ENCODE measurements at regions of chr13 and their contacts with region 1.

Region 1: DNA sequence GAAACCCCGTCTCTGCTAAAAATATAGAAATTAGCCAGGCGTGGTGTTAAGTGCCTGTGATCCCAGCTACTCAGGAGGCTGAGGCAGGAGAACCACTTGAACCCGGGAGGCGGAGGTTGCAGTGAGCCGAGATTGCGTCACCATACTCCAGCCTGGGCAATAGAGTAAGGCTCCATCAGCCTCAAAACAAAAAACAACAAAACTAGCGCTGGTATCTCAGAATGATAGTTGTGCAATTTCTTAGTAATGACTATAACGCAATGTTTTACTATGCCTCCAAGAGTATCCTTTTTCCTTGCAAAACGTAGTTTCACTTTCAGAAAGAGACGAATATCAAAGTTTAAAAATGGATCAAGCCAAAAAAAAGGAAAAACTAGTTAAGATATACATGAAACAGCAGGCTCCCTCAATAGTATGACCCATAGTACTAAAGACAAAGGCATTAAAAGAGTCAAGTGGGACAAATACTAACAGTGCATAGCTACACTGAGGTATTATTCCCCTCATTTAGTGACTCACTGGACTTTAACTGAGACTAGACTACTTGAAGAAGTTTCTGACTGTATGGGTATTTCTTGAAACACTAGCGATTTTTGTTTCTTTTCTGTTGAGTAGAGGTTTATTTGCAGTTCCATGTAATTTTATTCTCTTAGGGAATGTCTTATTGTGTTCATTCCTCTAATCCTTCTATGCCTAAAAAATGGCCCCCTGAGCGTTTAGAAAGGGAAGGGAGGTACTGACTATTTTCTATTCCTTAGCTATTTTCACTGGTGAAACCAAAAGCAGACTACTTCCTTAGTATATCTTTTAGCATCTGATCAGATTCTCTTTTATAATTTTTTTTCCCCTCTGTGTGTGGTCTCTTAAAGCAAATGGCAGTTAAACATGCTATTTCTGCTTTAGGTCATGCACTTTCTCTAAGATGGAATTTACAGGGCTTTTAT is 10.4 kb upstream of the ITM2B start:
- DNase-seq: no peak
- H3K4me3 Mint-ChIP-seq: no peak overlapping the region
- H3K27ac Mint-ChIP-seq: no peak overlapping the region
- H3K4me1 Mint-ChIP-seq: peaks cover 37% of the 10 kb centered on the region
- H3K27me3 Mint-ChIP-seq: peaks cover 32% of the 10 kb centered on the region

Region 2: GRCh38 chr13:48155848-48156247 is 66.8 kb before region 1 on chr13:
- intact Hi-C with region 1: loop called (anchors 1 kb)
- DNase-seq: peak; percentile 9
- H3K4me3 Mint-ChIP-seq: no peak overlapping the region
- H3K27ac Mint-ChIP-seq: peak overlapping the region; percentile 30
- H3K4me1 Mint-ChIP-seq: peaks cover 73% of the 10 kb centered on the region
- H3K27me3 Mint-ChIP-seq: no peaks in the 10 kb centered on the region

Region 3: DNA sequence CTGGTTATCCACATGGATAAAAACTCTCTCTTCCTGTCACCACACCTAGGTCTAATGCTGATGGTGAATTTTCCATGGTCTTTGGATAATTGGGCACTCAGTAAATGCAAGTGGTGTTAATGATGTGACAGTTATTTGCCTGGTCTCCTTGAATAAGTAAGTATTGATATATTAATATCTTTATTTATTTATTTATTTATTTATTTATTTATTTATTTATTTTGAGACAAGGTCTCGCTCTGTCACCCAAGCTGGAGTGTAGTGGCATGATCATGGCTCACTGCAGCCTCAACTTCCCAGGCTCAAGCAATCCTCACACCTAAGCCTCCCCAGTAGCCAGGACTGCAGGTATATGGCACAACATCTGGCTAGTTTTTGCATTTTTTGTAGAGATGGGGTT is 35.9 kb before region 1 on chr13:
- intact Hi-C with region 1: loop called (anchors 1 kb)
- DNase-seq: no peak
- H3K4me3 Mint-ChIP-seq: no peak overlapping the region
- H3K27ac Mint-ChIP-seq: no peak overlapping the region
- H3K4me1 Mint-ChIP-seq: peaks cover 21% of the 10 kb centered on the region
- H3K27me3 Mint-ChIP-seq: peaks cover 10% of the 10 kb centered on the region

Region 4: GRCh38 chr13:48210178-48210577 is 12.5 kb before region 1 on chr13:
- intact Hi-C with region 1: loop called (anchors 1 kb)
- DNase-seq: no peak
- H3K4me3 Mint-ChIP-seq: no peak overlapping the region
- H3K27ac Mint-ChIP-seq: no peak overlapping the region
- H3K4me1 Mint-ChIP-seq: peaks cover 10% of the 10 kb centered on the region
- H3K27me3 Mint-ChIP-seq: peaks cover 49% of the 10 kb centered on the region

Region 5: DNA sequence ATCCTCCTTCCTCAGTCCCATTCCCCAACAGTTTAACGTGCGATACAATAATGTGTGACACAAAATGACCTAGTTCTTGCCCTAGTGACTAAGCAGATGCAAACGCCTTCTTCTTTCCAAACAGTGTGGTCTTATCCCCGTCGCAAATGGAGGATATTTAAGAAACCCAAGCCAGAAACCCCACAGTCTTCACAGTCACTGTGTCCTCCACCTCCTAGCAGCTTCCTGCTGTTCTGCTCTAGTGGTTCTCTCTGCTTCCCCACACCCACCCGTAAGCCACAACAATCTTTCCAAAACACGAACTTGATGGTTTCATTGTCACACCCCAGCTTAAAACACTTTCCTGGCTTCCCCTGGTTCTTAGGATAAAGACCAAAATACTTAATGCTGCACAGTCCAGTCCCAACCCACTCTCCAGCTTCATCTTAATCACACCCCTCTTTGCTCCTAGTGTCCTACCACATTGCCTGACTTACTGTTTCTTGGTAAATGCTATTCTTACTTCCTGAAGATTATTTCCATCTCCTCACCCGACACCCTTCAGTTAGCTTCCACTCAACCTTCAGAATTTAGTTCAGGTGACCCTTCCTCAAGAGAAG is 42.7 kb after region 1 on chr13:
- intact Hi-C with region 1: loop called (anchors 5 kb)
- DNase-seq: peak; percentile 13
- H3K4me3 Mint-ChIP-seq: peak overlapping the region; percentile 8
- H3K27ac Mint-ChIP-seq: peak overlapping the region; percentile 40
- H3K4me1 Mint-ChIP-seq: peaks cover 24% of the 10 kb centered on the region
- H3K27me3 Mint-ChIP-seq: no peaks in the 10 kb centered on the region

Region 6: DNA sequence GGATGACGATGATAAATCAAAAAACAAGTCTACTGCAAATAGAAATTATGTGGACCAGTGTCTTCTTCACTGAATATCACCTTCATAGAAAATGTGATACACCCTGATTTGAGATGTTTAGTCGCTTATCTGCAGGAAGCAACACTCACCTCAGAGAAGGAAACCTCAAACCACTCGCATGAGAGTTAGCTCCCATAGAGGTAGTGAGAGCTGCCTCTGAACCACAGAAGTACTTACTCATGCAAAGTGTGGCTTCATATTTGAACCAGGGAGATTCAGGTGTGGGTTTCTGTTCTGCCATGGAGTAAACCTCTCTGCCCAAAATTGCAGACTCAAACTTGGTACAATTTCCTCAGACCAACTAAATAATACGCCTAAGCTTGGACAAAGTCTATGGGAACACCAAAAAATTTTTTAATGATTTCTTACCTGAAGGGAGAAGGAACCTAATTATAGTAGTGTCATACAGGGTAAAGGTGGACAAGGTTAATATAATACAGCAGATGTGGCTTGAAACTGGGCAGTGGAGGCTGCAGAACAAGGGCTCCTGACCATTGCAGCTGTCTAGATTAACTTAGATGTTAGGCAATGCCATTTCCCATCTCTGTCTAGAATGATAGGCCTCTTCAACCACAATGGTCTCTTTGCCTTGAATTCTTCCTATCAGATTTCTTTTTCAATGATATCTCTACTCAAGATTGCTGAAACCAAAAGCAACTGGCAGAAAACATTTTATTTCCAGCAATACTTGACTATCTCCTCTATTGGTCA is 339.9 kb after region 1 on chr13:
- intact Hi-C with region 1: loop called (anchors 1 kb)
- DNase-seq: peak; percentile 77
- H3K4me3 Mint-ChIP-seq: no peak overlapping the region
- H3K27ac Mint-ChIP-seq: no peak overlapping the region
- H3K4me1 Mint-ChIP-seq: peaks cover 59% of the 10 kb centered on the region
- H3K27me3 Mint-ChIP-seq: peaks cover 68% of the 10 kb centered on the region

Region 7: GRCh38 chr13:48879432-48879831 is 656.8 kb after region 1 on chr13:
- intact Hi-C with region 1: loop called (anchors 5 kb)
- DNase-seq: no peak
- H3K4me3 Mint-ChIP-seq: peak overlapping the region; percentile 1
- H3K27ac Mint-ChIP-seq: peak overlapping the region; percentile 1
- H3K4me1 Mint-ChIP-seq: peaks cover 52% of the 10 kb centered on the region
- H3K27me3 Mint-ChIP-seq: peaks cover 6% of the 10 kb centered on the region